Left ventricle myocardium superior (tissue), 1 donor: ENCODE measurements at regions of chr9 and their contacts with region 1.

Region 1: DNA sequence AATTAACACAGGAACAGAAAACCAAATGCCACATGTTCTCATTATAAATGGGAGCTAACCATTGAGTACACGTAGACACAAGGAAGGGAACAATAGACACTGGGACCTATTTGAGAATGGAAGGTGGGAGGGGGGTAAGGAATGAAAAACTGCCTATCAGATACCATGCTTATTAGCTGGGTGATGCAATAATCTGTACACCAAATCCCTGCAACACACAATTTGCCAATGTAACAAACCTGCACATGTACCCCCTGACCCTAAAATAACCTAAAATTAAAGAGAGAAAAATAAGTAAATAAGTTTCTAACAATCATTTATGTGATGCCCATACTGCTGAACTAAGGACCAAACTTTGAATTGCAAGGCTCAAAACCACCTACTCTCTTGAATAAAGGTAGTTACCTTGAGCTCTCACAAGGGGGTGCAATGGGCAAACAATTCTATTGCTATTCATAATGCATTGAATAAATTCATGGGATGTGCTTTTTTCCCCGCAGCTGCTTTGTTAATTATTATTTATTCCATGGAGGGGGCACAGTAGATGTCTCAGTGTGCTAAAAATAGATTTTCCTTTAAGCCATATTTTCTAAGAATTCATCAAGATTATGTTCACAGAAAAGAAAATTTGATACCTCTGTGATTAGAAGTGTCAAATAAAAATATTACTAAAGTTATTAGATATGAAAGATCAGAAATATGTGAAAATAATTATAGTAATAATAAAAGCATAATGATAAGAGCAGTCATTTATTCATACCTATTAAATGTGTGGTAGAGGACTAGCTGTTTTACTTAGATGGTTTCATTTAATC is 76.2 kb upstream of the PTPN3 start:
- DNase-seq: no peak
- ATAC-seq: peak; percentile 74

Region 2: DNA sequence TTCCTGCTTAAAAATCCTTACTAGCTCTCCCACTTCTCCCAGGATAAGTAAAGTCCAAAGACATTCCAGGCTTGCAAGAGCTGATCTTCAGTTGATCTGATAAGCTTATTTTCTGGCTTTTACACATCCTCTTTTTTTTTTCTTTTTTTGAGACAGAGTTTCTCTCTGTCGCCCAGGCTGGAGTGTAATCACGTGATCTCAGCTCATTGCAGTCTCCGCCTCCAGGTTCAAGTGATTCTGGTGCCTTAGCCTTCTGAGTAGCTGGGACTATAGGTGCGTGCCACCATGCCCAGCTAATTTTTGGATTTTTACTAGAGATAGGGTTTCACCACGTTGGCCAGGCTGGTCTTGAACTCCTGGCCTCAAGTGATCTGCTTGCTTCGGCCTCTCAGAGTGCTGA is 38.9 kb before region 1 on chr9:
- intact Hi-C with region 1: no loop called
- DNase-seq: no peak
- ATAC-seq: no peak

Region 3: GRCh38 chr9:109652964-109653363 is 78.7 kb after region 1 on chr9:
- intact Hi-C with region 1: loop called (anchors 10 kb)
- DNase-seq: no peak
- ATAC-seq: peak; percentile 80

Region 4: GRCh38 chr9:109880277-109881169 is 306.2 kb after region 1 on chr9:
- intact Hi-C with region 1: loop called (anchors 10 kb)
- DNase-seq: no peak
- ATAC-seq: no peak